K562 (cell line): ENCODE measurements at regions of chr17 and their contacts with region 1.

Region 1: GRCh38 chr17:77331301-77331864 is 190.6 kb downstream of the SEC14L1 start:
- DNase-seq: peak; percentile 79 to 89 (median 86)
- ATAC-seq: peak; percentile 94
- H3K4me3 ChIP-seq: no peak overlapping the region
- H3K27ac ChIP-seq: no peak overlapping the region
- H3K4me1 ChIP-seq: peaks cover 0 to 36% of the 10 kb centered on the region in 2 experiments; a peak in 3 of 5 replicates
- H3K27me3 ChIP-seq: no peaks in the 10 kb centered on the region
- CTCF ChIP-seq: peak; percentile 88 to 92 (median 92)
- EP300 ChIP-seq: no peak
- POLR2A ChIP-seq: no peak
- RAD21 ChIP-seq: peak; percentile 93 to 95

Region 2: DNA sequence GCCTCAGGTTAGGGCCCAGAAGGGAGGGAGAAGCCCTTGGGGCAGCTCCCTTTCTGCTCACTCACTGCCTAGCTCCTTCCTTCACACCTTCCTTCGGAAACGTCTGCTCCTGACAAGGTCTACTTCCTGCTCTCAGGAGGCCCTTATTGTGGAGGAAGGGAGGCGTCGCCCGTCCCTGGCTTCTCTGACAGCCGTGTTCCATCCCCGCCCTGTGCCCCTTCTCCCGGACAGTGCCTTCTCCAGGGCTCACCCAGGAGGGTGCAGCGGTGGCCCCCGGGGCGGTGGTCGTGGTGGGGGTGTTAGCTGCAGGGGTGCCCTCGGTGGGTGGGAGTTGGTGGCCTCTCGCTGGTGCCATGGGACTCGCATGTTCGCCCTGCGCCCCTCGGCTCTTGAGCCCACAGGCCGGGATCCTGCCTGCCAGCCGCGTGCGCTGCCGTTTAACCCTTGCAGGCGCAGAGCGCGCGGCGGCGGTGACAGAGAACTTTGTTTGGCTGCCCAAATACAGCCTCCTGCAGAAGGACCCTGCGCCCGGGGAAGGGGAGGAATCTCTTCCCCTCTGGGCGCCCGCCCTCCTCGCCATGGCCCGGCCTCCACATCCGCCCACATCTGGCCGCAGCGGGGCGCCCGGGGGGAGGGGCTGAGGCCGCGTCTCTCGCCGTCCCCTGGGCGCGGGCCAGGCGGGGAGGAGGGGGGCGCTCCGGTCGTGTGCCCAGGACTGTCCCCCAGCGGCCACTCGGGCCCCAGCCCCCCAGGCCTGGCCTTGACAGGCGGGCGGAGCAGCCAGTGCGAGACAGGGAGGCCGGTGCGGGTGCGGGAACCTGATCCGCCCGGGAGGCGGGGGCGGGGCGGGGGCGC is 41.3 kb after region 1 on chr17:
- CTCF ChIA-PET with region 1: interaction called, 3 read pairs
- POLR2A ChIA-PET with region 1: no interaction called
- in situ Hi-C with region 1: no loop called
- intact Hi-C with region 1: loop called (anchors 5 kb)
- DNase-seq: peak; percentile 89 to 95 (median 93)
- ATAC-seq: peak; percentile 88
- H3K4me3 ChIP-seq: peak overlapping the region; percentile 52
- H3K27ac ChIP-seq: peak overlapping the region; percentile 66
- H3K4me1 ChIP-seq: peaks cover 57 to 73% of the 10 kb centered on the region in 2 experiments
- H3K27me3 ChIP-seq: no peaks in the 10 kb centered on the region
- CTCF ChIP-seq: no peak
- EP300 ChIP-seq: no peak
- POLR2A ChIP-seq: no peak; the same call in 1 of the 2 replicates
- RAD21 ChIP-seq: no peak

Region 3: DNA sequence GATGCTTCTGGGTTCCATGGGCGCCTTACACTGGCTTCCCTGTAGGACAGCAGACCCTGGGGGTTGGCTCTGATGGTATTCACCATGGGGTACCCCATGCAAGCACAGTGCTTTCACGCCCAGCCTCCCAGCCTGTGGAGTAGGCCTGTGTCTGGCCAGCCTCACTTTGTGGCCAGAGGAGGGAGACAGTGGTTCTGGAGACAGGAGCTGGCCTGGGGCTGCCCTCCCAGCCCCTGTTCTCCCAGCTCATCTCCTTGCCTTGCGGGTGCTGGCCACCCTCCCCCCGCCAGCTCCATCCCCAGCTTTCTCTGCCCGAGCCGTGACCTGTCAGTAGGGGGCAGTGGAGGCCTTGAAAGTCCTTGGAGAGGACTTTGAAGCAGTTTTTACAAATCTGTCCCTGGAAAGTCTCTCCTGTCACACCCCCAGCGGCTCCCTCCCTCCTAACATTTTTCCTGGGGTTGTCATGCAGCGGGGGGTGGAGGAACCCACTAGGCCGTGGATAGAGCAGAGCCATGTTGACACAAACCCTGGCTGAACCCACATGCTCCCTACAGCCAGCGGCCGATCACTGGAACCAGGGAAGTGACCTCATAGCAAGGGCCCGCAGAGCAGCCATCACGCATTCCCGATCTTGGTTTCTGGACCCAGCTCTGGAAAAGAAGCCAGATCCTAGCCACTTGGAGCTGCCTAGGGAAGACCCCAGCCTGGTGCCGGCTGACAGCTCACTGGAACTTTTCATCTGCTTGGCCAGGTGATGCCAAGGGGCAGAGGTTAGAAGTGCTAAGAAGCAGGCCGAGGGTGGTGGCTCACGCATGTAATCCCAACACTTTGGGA is 98.8 kb after region 1 on chr17:
- CTCF ChIA-PET with region 1: interaction called, 4 read pairs
- POLR2A ChIA-PET with region 1: interaction called, 3 read pairs
- in situ Hi-C with region 1: no loop called
- intact Hi-C with region 1: loop called (anchors 5 kb)
- DNase-seq: peak; percentile 79 to 88 (median 81)
- ATAC-seq: peak; percentile 83
- H3K4me3 ChIP-seq: no peak overlapping the region
- H3K27ac ChIP-seq: no peak overlapping the region
- H3K4me1 ChIP-seq: peaks cover 37 to 68% of the 10 kb centered on the region in 2 experiments
- H3K27me3 ChIP-seq: no peaks in the 10 kb centered on the region
- CTCF ChIP-seq: peak; percentile 84 to 88 (median 87)
- EP300 ChIP-seq: 0 out of 2 replicates have a peak, but pooled peaks have one; percentile 30
- POLR2A ChIP-seq: no peak
- RAD21 ChIP-seq: peak; percentile 81 to 87

Region 4: GRCh38 chr17:77494664-77495435 is 163.5 kb after region 1 on chr17:
- CTCF ChIA-PET with region 1: interaction called, 43 read pairs
- POLR2A ChIA-PET with region 1: interaction called, 5 read pairs
- in situ Hi-C with region 1: loop called (anchors 5 kb)
- intact Hi-C with region 1: loop called (anchors 1 kb)
- DNase-seq: peak; percentile 77 to 84 (median 83)
- ATAC-seq: peak; percentile 94
- H3K4me3 ChIP-seq: no peak overlapping the region
- H3K27ac ChIP-seq: no peak overlapping the region
- H3K4me1 ChIP-seq: peaks cover 0 to 10% of the 10 kb centered on the region in 2 experiments; a peak in 1 of 5 replicates
- H3K27me3 ChIP-seq: no peaks in the 10 kb centered on the region
- CTCF ChIP-seq: peak; percentile 91 to 96 (median 94)
- EP300 ChIP-seq: no peak
- POLR2A ChIP-seq: no peak
- RAD21 ChIP-seq: peak; percentile 96 to 99

Region 5: DNA sequence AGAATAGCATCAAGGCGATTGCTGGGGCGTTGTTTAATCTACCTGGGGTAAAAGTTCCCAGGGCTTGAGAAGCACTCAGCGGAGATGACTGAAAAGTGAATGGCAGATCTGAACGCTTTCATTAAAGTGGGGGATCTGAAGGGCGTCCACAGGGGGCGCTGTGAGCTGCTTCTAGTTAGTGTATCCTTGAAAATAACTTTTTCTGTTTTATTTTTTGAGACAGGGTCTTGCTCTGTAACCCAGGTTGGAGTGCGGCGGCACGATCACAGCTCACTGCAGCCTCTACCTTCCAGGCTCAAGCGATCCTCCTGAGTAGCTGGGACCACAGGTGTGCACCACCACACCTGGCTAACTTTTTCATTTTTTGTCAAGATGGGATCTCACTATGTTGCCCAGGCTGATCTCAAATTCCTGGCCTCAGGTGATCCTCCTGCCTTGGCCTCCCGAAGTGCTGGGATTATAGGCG is 169.8 kb after region 1 on chr17:
- CTCF ChIA-PET with region 1: interaction called, 43 read pairs
- POLR2A ChIA-PET with region 1: no interaction called
- in situ Hi-C with region 1: loop called (anchors 5 kb)
- intact Hi-C with region 1: no loop called
- DNase-seq: peak; percentile 60 to 68 (median 66)
- ATAC-seq: peak; percentile 57
- H3K4me3 ChIP-seq: no peak overlapping the region
- H3K27ac ChIP-seq: no peak overlapping the region
- H3K4me1 ChIP-seq: peaks cover 0 to 4% of the 10 kb centered on the region in 2 experiments; a peak in 1 of 5 replicates
- H3K27me3 ChIP-seq: peaks cover under 1 to 24% of the 10 kb centered on the region in 2 experiments; a peak in 4 of 5 replicates
- CTCF ChIP-seq: peak; percentile 42 to 72 (median 62)
- EP300 ChIP-seq: no peak
- POLR2A ChIP-seq: 0 out of 2 replicates have a peak, but pooled peaks have one; percentile 36
- RAD21 ChIP-seq: peak in 1 of 2 experiments; percentile 32; a peak in 2 of 4 replicates

Region 6: DNA sequence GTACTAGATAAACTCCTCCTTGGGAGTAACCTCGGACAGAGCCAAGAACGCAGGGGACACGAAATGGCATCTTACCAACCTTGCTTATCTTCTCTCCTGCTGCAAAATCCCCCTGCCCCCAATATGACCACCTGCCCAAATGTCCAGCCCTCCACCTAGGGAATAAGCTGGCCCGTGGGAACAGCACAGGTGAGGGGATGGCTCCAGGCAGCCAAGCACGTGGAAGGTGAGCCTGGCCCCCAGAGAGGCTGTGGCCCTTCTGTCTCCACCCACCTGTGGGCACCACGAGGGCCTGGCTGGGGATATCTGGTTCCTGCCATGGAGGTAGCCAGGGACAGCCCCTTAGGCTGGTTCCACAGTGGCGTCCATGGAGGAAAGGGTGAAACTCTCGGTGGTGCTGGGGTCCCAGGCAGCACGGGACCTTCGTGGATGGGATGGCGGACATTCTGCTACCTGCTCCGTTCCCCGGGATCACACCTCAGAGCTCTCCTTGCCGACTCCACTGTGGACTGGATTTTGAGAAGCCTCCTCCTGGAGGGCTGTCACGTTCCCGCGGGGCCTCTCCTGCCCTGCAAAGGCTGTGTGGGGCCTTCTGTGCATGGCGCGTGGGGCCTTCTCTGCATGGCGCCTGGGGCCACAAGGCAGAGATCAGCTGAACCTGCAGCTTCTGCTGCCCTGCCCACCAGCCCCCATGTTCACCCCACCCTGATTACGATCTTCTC is 238.6 kb after region 1 on chr17:
- CTCF ChIA-PET with region 1: no interaction called
- POLR2A ChIA-PET with region 1: no interaction called
- in situ Hi-C with region 1: no loop called
- intact Hi-C with region 1: no loop called
- DNase-seq: no peak
- ATAC-seq: no peak
- H3K4me3 ChIP-seq: no peak overlapping the region
- H3K27ac ChIP-seq: no peak overlapping the region
- H3K4me1 ChIP-seq: peaks cover 12 to 18% of the 10 kb centered on the region in 2 experiments
- H3K27me3 ChIP-seq: peaks cover 31 to 61% of the 10 kb centered on the region in 2 experiments
- CTCF ChIP-seq: no peak
- EP300 ChIP-seq: no peak
- POLR2A ChIP-seq: no peak
- RAD21 ChIP-seq: no peak